Right ventricle myocardium superior (tissue), 1 donor: ENCODE measurements at regions of chr7 and their contacts with region 1.

Region 1: GRCh38 chr7:116671681-116672595 is at the start of gene MET:
- DNase-seq: peak; percentile 78
- ATAC-seq: peak; percentile 92
- total RNA-seq, gene MET: 14.3 TPM

Region 2: GRCh38 chr7:116786791-116787443 is 115.0 kb after region 1 on chr7:
- intact Hi-C with region 1: loop called (anchors 10 kb)
- DNase-seq: no peak
- ATAC-seq: peak; percentile 22

Region 3: DNA sequence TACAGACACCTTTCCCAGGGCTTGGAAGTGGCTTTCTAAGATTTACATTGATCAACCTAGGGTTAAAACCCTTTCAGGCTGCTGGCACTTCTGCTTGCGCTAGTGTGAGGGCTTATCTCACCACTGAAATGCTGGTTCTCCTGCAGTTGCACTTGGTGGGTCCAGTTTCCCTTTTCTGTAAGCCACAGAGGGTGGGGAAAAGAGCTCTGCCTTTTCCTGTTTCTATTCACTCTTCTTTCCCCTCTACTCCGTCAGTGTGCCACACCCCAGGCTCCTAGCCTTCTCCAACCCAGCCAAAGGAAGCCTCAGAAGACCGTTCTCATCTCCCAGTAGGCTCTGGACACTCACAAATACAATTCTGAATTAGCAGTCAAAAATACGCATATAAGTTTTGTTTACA is 171.4 kb after region 1 on chr7:
- intact Hi-C with region 1: no loop called
- DNase-seq: no peak
- ATAC-seq: peak; percentile 71